ENCODE measurements at regions of chr17 and their contacts with region 1.

Region 1: GRCh38 chr17:81519284-81519955 is 6.8 kb upstream of the ACTG1 start:
- DNase-seq: peak; percentile 67
- ATAC-seq: peak; percentile 11
- H3K4me3 Mint-ChIP-seq: peak overlapping the region; percentile 93
- H3K27ac Mint-ChIP-seq: peak overlapping the region; percentile 68
- H3K4me1 Mint-ChIP-seq: peaks cover 45% of the 10 kb centered on the region
- H3K27me3 Mint-ChIP-seq: no peaks in the 10 kb centered on the region
- CTCF ChIP-seq: no peak

Region 2: GRCh38 chr17:80743181-80743771 is 776.1 kb before region 1 on chr17:
- CTCF ChIA-PET with region 1: no interaction called
- POLR2A ChIA-PET with region 1: no interaction called
- intact Hi-C with region 1: no loop called
- DNase-seq: no peak
- ATAC-seq: no peak
- H3K4me3 Mint-ChIP-seq: no peak overlapping the region
- H3K27ac Mint-ChIP-seq: no peak overlapping the region
- H3K4me1 Mint-ChIP-seq: peaks cover 27% of the 10 kb centered on the region
- H3K27me3 Mint-ChIP-seq: no peaks in the 10 kb centered on the region
- CTCF ChIP-seq: no peak

Region 3: DNA sequence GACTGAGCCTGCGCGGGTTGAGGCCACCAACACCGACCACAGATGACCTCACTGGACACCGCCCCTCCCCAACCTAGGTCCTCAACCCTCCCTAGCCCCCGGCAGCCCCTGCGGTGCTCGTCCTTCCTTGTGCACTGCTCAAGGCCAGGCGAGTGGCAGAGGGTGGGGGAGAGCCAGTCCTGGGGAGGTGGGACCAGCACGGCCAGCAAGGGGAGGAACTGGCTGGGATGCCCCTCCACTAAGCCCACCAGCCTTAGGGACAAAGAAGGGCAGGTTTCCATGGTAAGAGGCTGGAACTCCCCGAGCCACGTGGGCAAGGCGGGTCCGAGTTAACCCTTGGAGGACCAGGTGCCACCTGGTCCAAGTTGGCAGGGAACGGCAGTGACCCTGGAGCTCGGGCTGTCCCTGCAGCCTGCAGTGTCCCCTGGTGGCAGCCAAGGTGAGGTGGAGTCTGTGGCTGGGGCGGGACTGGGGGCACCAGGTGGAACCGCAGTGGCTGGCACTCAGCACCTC is 18.0 kb after region 1 on chr17:
- CTCF ChIA-PET with region 1: interaction called, 8 read pairs
- POLR2A ChIA-PET with region 1: interaction called, 5 read pairs
- intact Hi-C with region 1: loop called (anchors 1 kb)
- DNase-seq: peak; percentile 45
- ATAC-seq: peak; percentile 81
- H3K4me3 Mint-ChIP-seq: no peak overlapping the region
- H3K27ac Mint-ChIP-seq: no peak overlapping the region
- H3K4me1 Mint-ChIP-seq: peaks cover 23% of the 10 kb centered on the region
- H3K27me3 Mint-ChIP-seq: peaks cover 4% of the 10 kb centered on the region
- CTCF ChIP-seq: no peak

Region 4: GRCh38 chr17:81553018-81553615 is 33.7 kb after region 1 on chr17:
- CTCF ChIA-PET with region 1: interaction called, 7 read pairs
- POLR2A ChIA-PET with region 1: interaction called, 188 read pairs
- intact Hi-C with region 1: loop called (anchors 1 kb)
- DNase-seq: no peak
- ATAC-seq: peak; percentile 71
- H3K4me3 Mint-ChIP-seq: peak overlapping the region; percentile 91
- H3K27ac Mint-ChIP-seq: peak overlapping the region; percentile 92
- H3K4me1 Mint-ChIP-seq: peaks cover 45% of the 10 kb centered on the region
- H3K27me3 Mint-ChIP-seq: no peaks in the 10 kb centered on the region
- CTCF ChIP-seq: no peak

Region 5: DNA sequence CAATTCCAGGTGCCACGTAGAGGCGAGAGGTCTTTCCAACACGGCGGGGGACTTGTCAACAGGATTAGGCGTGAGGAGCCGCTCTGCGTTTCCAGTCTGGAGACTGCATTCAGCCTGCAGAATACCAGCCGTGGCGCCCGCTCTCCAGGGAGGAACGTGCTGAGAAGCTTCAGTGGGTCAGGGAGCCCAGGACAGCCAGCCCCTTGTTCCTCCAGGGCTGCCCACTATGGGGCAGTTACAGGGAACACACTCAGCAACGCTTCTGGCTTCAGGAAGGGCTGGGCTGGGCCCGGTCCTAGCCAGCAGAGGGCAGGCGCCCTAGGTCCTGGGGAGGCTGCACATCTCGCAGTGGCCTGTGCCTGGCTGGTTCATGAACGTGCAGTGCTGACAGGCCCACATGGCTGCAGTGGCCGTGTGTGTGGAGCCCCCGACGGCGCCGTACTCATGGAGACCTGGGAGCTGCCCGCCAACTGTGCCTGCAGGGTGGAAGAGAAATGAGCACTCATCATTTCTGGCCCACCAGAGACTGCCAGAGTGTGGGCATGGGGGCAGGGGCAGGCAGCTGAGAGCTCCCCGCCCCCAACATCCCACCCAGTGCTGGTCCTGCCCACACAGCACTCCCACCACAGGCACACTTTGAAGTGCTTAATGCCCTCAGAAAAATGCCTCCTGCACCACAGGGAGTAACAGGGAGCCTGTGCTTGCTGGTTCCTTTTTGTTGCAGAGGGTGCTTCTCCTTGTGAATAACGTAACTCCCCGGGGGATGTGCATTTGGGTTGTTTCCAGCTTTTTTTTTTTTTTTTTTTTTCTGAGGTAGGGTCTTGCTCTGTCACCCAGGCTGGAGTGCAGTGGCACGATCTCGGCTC is 39.8 kb after region 1 on chr17:
- CTCF ChIA-PET with region 1: interaction called, 5 read pairs
- POLR2A ChIA-PET with region 1: interaction called, 188 read pairs
- intact Hi-C with region 1: no loop called
- DNase-seq: no peak
- ATAC-seq: no peak
- H3K4me3 Mint-ChIP-seq: no peak overlapping the region
- H3K27ac Mint-ChIP-seq: no peak overlapping the region
- H3K4me1 Mint-ChIP-seq: peaks cover 46% of the 10 kb centered on the region
- H3K27me3 Mint-ChIP-seq: no peaks in the 10 kb centered on the region
- CTCF ChIP-seq: no peak

Region 6: GRCh38 chr17:81601525-81602120 is 82.2 kb after region 1 on chr17:
- CTCF ChIA-PET with region 1: interaction called, 23 read pairs
- POLR2A ChIA-PET with region 1: interaction called, 17 read pairs
- intact Hi-C with region 1: loop called (anchors 1 kb)
- DNase-seq: no peak
- ATAC-seq: peak; percentile 63
- H3K4me3 Mint-ChIP-seq: no peak overlapping the region
- H3K27ac Mint-ChIP-seq: peak overlapping the region; percentile 57
- H3K4me1 Mint-ChIP-seq: peaks cover 46% of the 10 kb centered on the region
- H3K27me3 Mint-ChIP-seq: no peaks in the 10 kb centered on the region
- CTCF ChIP-seq: peak; percentile 19

Region 7: GRCh38 chr17:81636505-81637288 is 117.3 kb after region 1 on chr17 and contains the starts of genes NPLOC4 and TSPAN10:
- CTCF ChIA-PET with region 1: no interaction called
- POLR2A ChIA-PET with region 1: no interaction called
- intact Hi-C with region 1: loop called (anchors 1 kb)
- DNase-seq: peak; percentile 85
- ATAC-seq: peak; percentile 89
- H3K4me3 Mint-ChIP-seq: peak within 1 kb of the TSS; percentile 95
- H3K27ac Mint-ChIP-seq: peak within 1 kb of the TSS; percentile 77
- H3K4me1 Mint-ChIP-seq: peaks cover 21% of the 10 kb centered on the region
- H3K27me3 Mint-ChIP-seq: no peaks in the 10 kb centered on the region
- CTCF ChIP-seq: no peak
- total RNA-seq, gene NPLOC4: 96.8 and 132 TPM in 2 replicates
- total RNA-seq, gene TSPAN10: 0.34 and 0.95 TPM in 2 replicates

Measured in activated B cell treated with CpG ODN at 0.5 μM for 24 hours (primary cell).